Right cardiac atrium (tissue), 5 donors: ENCODE measurements at regions of chr9 and their contacts with region 1.

Region 1: DNA sequence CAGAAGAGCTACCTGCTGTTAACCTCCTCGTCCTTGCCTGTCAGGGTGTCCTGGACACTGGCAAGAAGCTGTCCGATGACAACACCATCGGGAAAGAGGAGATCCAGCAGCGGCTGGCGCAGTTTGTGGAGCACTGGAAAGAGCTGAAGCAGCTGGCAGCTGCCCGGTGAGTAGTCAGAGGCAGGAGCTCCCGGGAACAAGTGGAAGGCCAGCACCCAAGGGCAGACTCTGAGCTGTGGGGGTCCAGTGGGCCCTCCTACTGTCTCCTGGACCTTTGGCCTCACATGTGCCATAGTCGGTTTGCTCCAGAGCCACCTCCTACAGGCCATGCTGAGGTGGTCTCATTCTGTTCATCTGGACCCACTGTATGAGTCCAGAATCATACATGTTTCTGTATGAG is 38.7 kb downstream of the DYNC2I2 start:
- DNase-seq: no peak
- ATAC-seq: no peak
- H3K4me3 ChIP-seq: no peak overlapping the region
- H3K27ac ChIP-seq: no peak overlapping the region
- H3K4me1 ChIP-seq: no peaks in the 10 kb centered on the region
- H3K27me3 ChIP-seq: no peaks in the 10 kb centered on the region

Region 2: DNA sequence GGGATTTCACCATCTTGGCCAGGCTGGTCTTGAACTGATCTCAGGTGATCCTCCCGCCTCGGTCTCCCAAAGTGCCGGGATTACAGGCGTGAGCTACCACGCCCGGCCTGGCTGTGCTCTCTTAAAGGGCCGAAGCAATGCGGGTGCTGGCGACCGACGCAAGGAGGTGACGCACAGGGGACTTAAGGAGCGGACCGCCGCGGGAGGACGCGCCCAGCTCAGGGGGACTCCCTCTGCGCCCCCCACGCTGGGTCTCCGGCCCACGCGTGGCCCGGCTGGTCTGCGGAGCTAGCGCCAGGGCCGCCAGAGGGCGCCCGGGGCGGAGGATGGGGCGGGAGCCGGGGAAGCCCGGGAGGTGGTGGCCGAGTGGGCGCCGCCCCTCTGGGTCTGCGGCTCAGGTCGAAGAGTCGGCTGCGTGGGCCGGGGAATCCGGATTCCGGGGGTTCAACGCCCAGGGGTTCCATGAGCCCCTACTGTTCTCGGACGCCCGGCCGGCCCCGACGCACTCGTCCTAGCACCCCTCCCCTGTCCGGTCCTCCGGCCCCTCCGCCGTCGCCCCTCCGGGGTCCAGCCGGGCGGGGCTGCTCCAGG is 197.8 kb before region 1 on chr9:
- intact Hi-C with region 1: no loop called
- DNase-seq: peak; percentile 81 to 93 (median 92)
- ATAC-seq: peak; percentile 91
- H3K4me3 ChIP-seq: peak overlapping the region; percentile 90
- H3K27ac ChIP-seq: peak overlapping the region; percentile 7
- H3K4me1 ChIP-seq: peaks cover 4% of the 10 kb centered on the region
- H3K27me3 ChIP-seq: no peaks in the 10 kb centered on the region

Region 3: GRCh38 chr9:128575469-128575868 is 42.5 kb before region 1 on chr9:
- intact Hi-C with region 1: loop called in 1 of 4 experiments (anchors 5 kb)
- DNase-seq: peak in 1 of 3 donors; percentile 45
- ATAC-seq: peak; percentile 85 to 95
- H3K4me3 ChIP-seq: no peak overlapping the region
- H3K27ac ChIP-seq: no peak overlapping the region
- H3K4me1 ChIP-seq: no peaks in the 10 kb centered on the region
- H3K27me3 ChIP-seq: no peaks in the 10 kb centered on the region